ENCODE measurements at regions of chr12 and their contacts with region 1.

Region 1: GRCh38 chr12:92145731-92146496 is at the start of gene BTG1:
- ATAC-seq: peak; percentile 76 to 86 (median 82)
- H3K4me3 ChIP-seq: peak within 1 kb of the TSS; percentile 57 to 83 (median 79)
- H3K27ac ChIP-seq: peak within 1 kb of the TSS; percentile 86 to 90
- H3K4me1 ChIP-seq: peaks cover 0 to 5% of the 10 kb centered on the region in 2 donors
- total RNA-seq, gene BTG1: 33.1 to 161 (median 68.2) TPM

Region 2: GRCh38 chr12:91561958-91562875 is 583.7 kb before region 1 on chr12:
- in situ Hi-C with region 1: loop called in 2 of 9 experiments (anchors 25 kb)
- ATAC-seq: peak in 7 of 8 experiments; percentile 47 to 95 (median 77)
- H3K4me3 ChIP-seq: no peak overlapping the region
- H3K27ac ChIP-seq: no peak overlapping the region
- H3K4me1 ChIP-seq: peaks cover 6 to 8% of the 10 kb centered on the region in 2 donors

Region 3: GRCh38 chr12:92021665-92022033 is 124.3 kb before region 1 on chr12:
- in situ Hi-C with region 1: no loop called
- ATAC-seq: peak in 6 of 8 experiments; percentile 42 to 97 (median 85)
- H3K4me3 ChIP-seq: no peak overlapping the region
- H3K27ac ChIP-seq: no peak overlapping the region
- H3K4me1 ChIP-seq: peaks cover 9 to 16% of the 10 kb centered on the region in 2 donors

Measured in motor neuron (in vitro differentiated cells).